Right ventricle myocardium inferior (tissue), 1 donor: ENCODE measurements at regions of chr7 and their contacts with region 1.

Region 1: DNA sequence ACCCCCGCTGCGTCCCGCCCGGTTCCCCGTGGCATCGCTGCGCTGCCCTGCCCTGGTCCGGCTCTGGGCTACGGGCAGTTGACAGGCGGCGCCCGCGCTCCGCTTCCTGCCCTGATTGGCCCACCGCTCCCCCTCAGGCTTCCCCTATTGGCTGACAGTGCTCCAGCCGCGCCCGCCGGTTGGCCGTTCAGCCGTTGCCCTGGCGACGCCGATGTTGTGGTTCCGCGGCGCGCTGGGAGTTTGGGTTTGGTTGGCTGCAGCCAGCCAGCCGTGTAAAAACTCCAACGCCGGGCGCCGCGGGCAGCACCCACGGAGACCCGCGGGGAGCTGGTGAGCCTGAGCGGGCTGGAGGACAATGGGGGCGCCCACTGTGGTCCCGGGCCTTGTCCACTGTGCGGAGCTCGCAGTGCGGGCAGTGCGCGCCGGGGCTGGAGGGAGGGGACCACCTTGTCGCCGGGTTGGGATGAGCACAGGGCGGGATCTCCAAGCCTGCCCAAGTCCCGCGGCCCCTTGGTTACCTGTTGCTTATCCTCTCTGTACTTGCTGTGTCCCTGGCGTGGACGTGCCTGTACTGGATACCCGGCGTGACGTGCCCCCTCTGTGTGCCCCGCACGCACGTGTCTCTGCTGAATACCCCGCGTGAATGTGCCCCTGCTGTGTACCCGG is at the start of gene C7orf57:
- DNase-seq: peak; percentile 97
- ATAC-seq: peak; percentile 99
- total RNA-seq, gene C7orf57: not detected

Region 2: GRCh38 chr7:47513741-47514241 is 521.6 kb before region 1 on chr7:
- intact Hi-C with region 1: no loop called
- DNase-seq: no peak
- ATAC-seq: peak; percentile 49

Region 3: DNA sequence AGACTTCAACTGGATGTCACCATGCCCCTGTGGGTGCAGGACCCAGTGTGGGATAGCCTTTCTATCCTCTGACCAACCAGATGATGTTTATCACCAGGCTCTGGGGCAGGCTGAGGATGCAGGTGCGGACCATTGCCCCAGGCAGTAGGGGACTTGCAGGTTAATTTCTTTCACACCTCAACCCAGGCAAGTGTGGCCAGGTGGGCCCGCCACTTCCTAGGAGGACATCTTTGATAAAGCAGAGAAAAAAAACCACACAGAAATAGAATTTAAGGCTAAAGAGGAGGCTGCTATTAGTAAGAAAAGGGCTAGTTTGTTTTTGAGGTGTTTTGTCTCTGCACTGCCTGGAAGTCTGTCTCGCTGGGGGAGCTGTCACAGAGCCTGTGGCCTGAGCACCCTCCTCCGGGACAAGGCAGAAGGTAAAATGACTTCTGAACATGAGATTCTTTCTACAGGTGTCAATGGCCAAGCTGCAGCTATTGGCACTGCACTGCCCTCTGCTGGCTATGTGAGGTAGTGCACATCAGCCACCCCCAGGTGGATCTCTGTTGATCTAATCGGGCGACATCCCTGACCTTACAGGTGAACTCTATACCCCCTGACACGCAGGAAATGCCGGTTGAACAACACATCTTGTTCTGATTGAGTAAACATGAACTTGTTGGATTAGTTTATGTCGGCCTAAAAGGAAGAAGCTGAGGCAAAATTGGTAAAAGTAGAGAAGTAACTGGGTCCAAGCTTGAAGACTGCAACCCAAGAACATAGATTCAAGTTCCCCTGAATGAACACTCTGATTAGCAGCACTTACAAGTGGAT is 74.6 kb after region 1 on chr7:
- intact Hi-C with region 1: loop called (anchors 2 kb)
- DNase-seq: peak; percentile 83
- ATAC-seq: peak; percentile 58

Region 4: GRCh38 chr7:48139459-48139858 is 104.0 kb after region 1 on chr7:
- intact Hi-C with region 1: no loop called
- DNase-seq: no peak
- ATAC-seq: no peak